CD4-positive, alpha-beta T cell (primary cell): ENCODE measurements at regions of chr16 and their contacts with region 1.

Region 1: DNA sequence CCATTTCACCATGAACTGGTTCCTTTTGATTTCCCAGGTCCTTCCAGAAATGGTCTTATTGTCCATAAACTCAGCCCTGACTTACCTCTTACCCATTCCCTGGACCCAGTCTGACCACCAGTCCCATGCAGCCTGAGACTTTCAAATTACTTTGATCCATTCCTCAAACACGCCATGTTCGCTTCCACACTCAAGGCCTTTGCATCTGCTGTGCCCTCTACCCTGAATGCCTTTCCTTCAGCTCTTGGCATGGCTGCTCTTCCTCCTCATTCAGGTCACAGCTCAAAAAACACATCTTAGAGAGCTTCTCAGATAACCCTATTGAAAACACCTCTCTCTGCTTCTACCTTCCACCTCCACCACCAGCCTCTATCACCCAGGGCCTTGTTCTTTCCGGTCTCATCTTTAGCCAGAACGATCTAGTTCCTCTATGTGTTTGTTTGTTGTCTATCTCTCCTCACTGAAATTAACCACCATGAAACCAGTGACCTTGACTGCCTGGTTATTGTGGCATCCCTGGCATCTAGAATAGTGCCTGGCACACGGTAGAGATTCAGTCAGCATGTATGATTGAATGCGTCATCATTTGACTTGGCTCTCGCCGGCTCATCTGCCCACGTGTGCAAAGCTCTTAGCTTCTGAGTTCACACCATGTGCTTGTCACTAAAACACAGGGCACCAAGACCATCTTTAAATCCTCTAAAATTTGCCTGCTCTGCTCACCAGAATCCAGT is 12.8 kb downstream of the CRYM start:
- DNase-seq: no peak
- ATAC-seq: no peak
- H3K4me3 ChIP-seq: no peak overlapping the region
- H3K4me3 Mint-ChIP-seq: no peak overlapping the region
- H3K27ac ChIP-seq: no peak overlapping the region
- H3K27ac Mint-ChIP-seq: no peak overlapping the region
- H3K4me1 ChIP-seq: no peaks in the 10 kb centered on the region
- H3K4me1 Mint-ChIP-seq: no peaks in the 10 kb centered on the region
- H3K27me3 ChIP-seq: no peaks in the 10 kb centered on the region
- H3K27me3 Mint-ChIP-seq: no peaks in the 10 kb centered on the region
- CTCF ChIP-seq: no peak

Region 2: DNA sequence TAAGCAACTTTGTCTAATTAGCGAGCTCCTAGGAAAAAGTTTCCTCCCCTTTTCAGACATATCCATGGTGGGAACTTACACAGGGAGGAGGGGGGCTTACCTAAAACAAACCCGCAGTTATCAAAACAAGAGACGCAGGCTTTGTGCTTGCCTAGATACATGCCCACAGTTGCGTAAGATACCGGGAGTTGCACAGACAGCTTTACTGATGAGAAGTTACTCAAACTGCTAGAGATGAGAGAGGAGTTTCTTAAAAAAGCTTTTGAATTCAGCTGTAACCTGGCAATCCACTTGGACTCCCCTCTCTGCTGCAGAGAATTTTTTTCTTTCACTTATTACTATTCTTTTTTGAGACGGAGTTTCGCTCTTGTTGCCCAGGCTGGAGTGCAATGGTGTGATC is 47.1 kb before region 1 on chr16:
- CTCF ChIA-PET with region 1: no interaction called
- POLR2A ChIA-PET with region 1: no interaction called
- intact Hi-C with region 1: loop called in 1 of 2 experiments (anchors 5 kb)
- DNase-seq: no peak
- ATAC-seq: no peak
- H3K4me3 ChIP-seq: no peak overlapping the region
- H3K4me3 Mint-ChIP-seq: no peak overlapping the region
- H3K27ac ChIP-seq: no peak overlapping the region
- H3K27ac Mint-ChIP-seq: no peak overlapping the region
- H3K4me1 ChIP-seq: no peaks in the 10 kb centered on the region
- H3K4me1 Mint-ChIP-seq: no peaks in the 10 kb centered on the region
- H3K27me3 ChIP-seq: no peaks in the 10 kb centered on the region
- H3K27me3 Mint-ChIP-seq: peaks cover 43% of the 10 kb centered on the region
- CTCF ChIP-seq: no peak